Common myeloid progenitor, CD34-positive (primary cell): ENCODE measurements at regions of chr15 and their contacts with region 1.

Region 1: DNA sequence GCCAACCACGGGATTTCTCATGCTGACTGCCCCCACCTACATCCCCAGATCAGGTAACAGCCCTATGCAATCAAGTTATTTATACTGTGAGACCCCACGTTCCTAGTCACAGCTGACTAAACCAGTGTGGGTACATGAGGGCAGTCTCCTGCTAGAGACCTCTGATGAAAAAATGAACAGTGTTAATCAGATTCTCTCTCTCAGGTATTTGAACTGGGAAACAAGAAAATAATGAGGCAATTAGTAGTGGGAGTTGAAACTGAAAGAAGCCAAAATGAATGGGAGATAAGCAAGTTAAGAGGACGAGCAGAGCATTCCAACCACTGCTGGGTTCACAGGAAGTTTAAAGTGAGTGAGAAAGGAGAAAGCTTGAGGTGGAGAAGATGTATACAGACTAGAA is 98.5 kb upstream of the MYO5C start:
- DNase-seq: no peak
- H3K4me3 ChIP-seq: no peak overlapping the region
- H3K27ac ChIP-seq: no peak overlapping the region
- H3K4me1 ChIP-seq: no peaks in the 10 kb centered on the region
- H3K27me3 ChIP-seq: no peaks in the 10 kb centered on the region

Region 2: DNA sequence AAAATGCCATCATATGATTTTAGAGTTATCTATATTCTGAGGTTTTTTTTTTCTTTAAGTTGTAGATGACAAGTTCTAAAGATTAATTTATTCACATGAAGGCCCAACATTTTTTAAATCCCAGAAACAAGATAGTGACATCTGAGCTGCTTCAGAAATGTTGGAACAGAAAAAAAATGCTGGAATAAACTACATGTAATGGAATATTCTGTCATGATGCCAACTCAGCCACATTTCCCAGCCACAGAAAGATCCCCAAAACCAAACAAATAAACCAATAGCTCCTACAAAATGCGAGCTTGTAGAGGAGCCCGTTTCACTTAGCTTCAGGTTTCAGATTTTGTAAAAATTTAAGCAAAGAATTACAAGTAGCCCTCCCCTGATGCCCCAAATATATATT is 12.5 kb after region 1 on chr15:
- CTCF ChIA-PET with region 1: interaction called, 14 read pairs
- POLR2A ChIA-PET with region 1: no interaction called
- DNase-seq: no peak
- H3K4me3 ChIP-seq: no peak overlapping the region
- H3K27ac ChIP-seq: no peak overlapping the region
- H3K4me1 ChIP-seq: no peaks in the 10 kb centered on the region
- H3K27me3 ChIP-seq: no peaks in the 10 kb centered on the region